A549 (cell line): ENCODE measurements at regions of chr19 and their contacts with region 1.

Region 1: GRCh38 chr19:33241530-33242101 is 16.0 kb upstream of the SLC7A10 start:
- DNase-seq: peak in 1 of 2 experiments; percentile 45
- ATAC-seq: peak; percentile 22 to 73; a peak in 4 of 6 replicates
- H3K4me3 ChIP-seq: no peak overlapping the region
- H3K27ac ChIP-seq: peak overlapping the region in 1 of 2 experiments; percentile 46; a peak in 3 of 6 replicates
- H3K4me1 ChIP-seq: 0 out of 3 replicates have a peak, but pooled peaks cover 3% of the 10 kb centered on the region
- CTCF ChIP-seq: peak; percentile 98
- EP300 ChIP-seq: no peak
- POLR2A ChIP-seq: no peak
- RAD21 ChIP-seq: peak; percentile 97 to 100

Region 2: GRCh38 chr19:33254245-33254824 is 12.7 kb after region 1 on chr19:
- CTCF ChIA-PET with region 1: interaction called, 105 read pairs
- POLR2A ChIA-PET with region 1: no interaction called
- DNase-seq: no peak
- ATAC-seq: peak; percentile 11 to 24; a peak in 3 of 6 replicates
- H3K4me3 ChIP-seq: no peak overlapping the region
- H3K27ac ChIP-seq: no peak overlapping the region
- H3K4me1 ChIP-seq: peaks cover 8% of the 10 kb centered on the region
- CTCF ChIP-seq: no peak
- EP300 ChIP-seq: no peak
- POLR2A ChIP-seq: no peak
- RAD21 ChIP-seq: no peak

Region 3: DNA sequence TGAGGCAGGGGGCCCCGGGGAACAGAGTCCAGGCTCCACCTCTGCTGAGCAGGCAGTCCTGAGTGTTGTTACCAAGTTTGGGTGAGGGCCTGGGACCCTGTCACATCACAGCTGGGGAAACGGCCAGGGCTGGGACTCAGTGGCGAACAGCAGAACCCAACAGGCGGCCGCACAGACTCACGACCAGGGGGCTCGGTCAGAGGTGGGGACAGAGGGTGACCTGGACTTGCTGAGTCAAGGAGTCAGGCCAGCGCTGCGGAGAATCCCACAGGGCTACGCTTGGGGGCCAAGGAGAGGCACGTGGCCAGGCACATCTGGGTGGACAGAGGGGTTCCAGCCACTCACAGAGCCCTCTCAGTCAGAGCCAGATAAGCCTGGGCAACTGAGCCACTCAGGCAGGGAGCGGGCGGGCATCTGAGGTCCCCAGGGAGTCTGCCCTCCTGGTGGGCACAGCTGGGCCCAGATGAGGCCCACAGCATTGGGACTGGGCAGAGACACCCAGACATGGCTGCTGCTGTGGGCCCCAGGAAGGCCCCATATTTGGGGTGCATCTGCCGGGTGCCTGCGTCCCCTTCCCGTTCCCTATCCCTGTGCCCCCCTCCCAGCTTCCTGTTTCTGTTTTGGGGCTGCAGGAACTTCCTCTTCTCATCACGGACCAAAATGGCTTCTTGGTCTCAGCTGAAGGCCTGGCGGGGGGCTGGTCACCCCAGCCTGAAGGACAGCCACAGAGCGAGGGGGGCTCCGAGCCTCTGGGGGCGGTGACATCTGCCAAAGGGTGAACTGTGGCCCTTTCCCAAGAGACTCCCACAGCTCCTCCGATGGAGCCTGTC is 26.8 kb after region 1 on chr19:
- CTCF ChIA-PET with region 1: interaction called, 35 read pairs
- POLR2A ChIA-PET with region 1: no interaction called
- DNase-seq: no peak
- ATAC-seq: peak in 1 of 2 experiments; percentile 4; a peak in 3 of 6 replicates
- H3K4me3 ChIP-seq: no peak overlapping the region
- H3K27ac ChIP-seq: no peak overlapping the region; a peak in 1 of 6 replicates
- H3K4me1 ChIP-seq: peaks cover under 1% of the 10 kb centered on the region; the same call in 1 of the 3 replicates
- CTCF ChIP-seq: no peak
- EP300 ChIP-seq: no peak
- POLR2A ChIP-seq: no peak
- RAD21 ChIP-seq: no peak

Region 4: DNA sequence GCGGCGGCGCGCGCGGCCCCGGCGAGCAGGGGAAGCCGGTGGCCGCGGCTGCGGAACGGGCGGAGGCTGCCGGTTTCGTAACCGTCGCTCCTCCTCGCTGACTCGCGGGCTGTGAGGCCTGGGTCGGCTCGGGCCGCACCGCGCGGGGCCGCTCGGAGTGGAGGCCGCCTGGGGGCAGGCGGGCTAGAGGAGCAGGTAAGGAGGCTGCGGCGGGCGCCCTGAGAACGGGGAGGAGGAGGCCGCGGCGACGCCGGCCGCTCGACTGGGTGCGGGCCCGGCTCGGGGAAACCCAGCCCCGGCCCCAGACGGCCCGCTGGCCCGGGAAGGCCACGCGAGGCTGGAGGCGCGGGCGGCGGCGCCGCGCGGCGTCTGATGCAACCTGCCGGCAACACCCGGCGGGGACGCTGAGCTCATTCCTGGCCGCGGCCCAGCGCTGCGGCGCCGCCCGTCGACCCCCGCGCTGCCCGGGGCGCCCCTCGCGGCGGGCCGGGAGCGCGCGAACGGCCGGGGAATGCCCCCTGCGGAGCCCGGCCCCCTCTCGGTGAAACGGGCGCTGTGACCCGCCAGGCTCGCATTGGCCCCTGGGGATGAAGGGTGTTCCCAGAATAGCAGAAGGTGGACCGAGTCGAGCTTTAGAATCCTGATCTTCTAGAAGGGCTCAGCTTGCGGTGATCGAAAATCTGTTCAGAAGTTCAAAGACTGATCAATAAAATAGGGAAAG is 132.2 kb after region 1 on chr19 and contains the start of gene CEBPG:
- CTCF ChIA-PET with region 1: interaction called, 54 read pairs
- POLR2A ChIA-PET with region 1: interaction called, 9 read pairs
- DNase-seq: peak in 1 of 2 experiments; percentile 93
- ATAC-seq: peak; percentile 29 to 75
- H3K4me3 ChIP-seq: peak within 1 kb of the TSS; percentile 65
- H3K27ac ChIP-seq: peak within 1 kb of the TSS; percentile 92 to 95
- H3K4me1 ChIP-seq: peaks cover 37% of the 10 kb centered on the region
- CTCF ChIP-seq: peak; percentile 43
- EP300 ChIP-seq: peak in 1 of 2 experiments; percentile 67; a peak in 2 of 5 replicates
- POLR2A ChIP-seq: peak; percentile 73
- RAD21 ChIP-seq: no peak
- polyA plus RNA-seq, gene CEBPG: 104 and 138 TPM in 2 replicates

Region 5: DNA sequence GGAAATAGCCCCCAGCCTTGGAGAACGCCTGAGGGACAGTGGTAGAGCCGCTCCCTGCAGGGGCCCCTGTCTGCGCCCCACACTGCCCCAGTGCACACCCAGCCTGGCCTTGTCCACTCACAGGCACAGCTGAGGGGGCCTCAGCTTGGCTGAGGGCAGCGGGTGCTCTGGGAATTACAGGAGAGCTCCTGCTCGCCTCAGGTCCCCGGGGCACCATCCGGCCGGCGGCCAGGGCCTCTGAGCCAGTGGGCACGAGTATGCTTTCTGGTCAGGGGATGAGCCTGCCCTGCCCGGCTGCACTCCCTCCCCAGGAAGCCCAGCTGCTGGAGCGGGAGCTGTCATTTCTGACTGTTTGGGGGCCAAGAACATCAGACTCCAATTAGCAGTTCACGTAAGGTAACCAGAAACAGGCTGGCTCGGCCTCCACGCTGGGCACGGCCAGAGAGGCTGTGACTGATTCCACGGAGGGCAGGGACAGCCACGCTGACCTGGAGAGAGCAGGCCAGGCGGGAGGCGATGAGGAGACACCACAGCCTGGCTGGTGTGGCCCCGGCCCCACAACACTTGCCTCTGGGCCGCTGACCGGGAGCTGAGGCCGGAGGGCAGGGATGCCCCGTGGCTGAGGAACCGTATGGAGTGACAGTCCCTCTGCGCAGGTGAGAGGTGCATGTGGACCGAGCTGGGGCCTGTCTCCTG is 147.3 kb after region 1 on chr19:
- CTCF ChIA-PET with region 1: interaction called, 1,493 read pairs
- POLR2A ChIA-PET with region 1: no interaction called
- DNase-seq: no peak
- ATAC-seq: no peak
- H3K4me3 ChIP-seq: no peak overlapping the region
- H3K27ac ChIP-seq: no peak overlapping the region
- H3K4me1 ChIP-seq: peaks cover 20% of the 10 kb centered on the region; the same call in 2 of the 3 replicates
- CTCF ChIP-seq: no peak
- EP300 ChIP-seq: no peak
- POLR2A ChIP-seq: no peak
- RAD21 ChIP-seq: no peak

Region 6: DNA sequence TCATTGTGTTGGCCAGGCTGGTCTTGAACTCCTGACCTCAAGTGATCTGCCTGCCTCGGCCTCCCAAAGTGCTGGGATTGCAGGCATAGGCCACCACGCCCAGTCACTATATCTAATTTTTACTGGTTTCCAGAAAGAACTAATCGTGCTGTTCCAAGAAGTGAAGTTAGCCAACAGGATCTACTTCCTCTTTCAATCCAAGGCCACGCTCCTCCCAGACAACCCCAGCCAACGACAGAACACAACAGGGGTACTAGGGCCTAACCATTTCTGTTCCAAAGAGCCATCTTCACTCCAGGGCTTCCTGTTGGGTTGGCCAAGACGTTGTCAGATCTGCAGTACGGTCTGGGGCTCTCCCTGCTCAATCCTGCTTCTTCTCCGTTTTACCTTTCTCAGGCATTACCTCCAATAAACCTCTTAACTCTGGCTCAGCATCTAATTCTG is 923.7 kb after region 1 on chr19:
- CTCF ChIA-PET with region 1: no interaction called
- POLR2A ChIA-PET with region 1: no interaction called
- DNase-seq: no peak
- ATAC-seq: no peak
- H3K4me3 ChIP-seq: no peak overlapping the region
- H3K27ac ChIP-seq: no peak overlapping the region
- H3K4me1 ChIP-seq: peaks cover under 1% of the 10 kb centered on the region; the same call in 1 of the 3 replicates
- CTCF ChIP-seq: no peak
- EP300 ChIP-seq: no peak
- POLR2A ChIP-seq: no peak
- RAD21 ChIP-seq: no peak